Ascending aorta (tissue), 2 donors: ENCODE measurements at regions of chr9 and their contacts with region 1.

Region 1: DNA sequence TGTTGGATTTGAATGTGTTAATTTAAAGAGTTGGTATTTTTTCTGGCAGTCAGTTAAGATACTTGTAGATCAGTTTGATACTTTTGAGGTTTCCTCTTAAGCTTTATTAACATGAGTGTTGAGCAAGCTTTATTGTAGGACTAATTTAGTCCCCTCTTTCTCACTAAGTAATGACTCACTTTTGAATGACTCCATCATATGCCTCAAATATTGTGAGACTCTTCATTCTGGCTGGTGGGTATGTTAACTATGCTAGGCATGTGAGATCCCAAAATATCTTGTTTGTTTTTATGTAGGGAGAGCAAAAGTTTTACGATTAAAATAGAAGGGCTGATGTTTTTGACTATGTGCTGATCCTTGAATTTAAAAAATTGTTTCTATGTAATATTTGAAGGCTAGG is 355.7 kb downstream of the IZUMO3 start:
- DNase-seq: no peak
- H3K4me3 ChIP-seq: no peak overlapping the region
- H3K27ac ChIP-seq: no peak overlapping the region
- H3K4me1 ChIP-seq: no peaks in the 10 kb centered on the region
- H3K27me3 ChIP-seq: no peaks in the 10 kb centered on the region
- CTCF ChIP-seq: no peak

Region 2: DNA sequence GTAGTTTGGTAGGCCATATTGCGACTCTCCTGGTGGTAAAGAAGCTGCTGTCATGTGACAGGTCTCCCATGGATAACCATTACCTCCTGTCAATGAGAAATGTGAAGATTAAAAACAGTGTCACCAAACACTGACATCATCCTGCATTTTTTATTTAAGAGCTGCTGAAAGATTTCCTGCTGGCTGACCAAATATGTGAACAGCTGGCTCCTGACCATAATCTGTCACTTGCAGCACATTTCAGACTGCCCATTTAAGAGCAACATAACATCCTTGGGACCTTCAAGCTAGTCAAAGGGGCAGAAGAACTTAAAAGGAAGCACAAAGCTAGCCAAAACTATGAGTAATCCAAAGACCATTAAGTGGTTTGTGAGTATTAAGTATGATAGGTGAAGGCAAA is 67.7 kb after region 1 on chr9:
- intact Hi-C with region 1: loop called (anchors 10 kb)
- DNase-seq: no peak
- H3K4me3 ChIP-seq: no peak overlapping the region
- H3K27ac ChIP-seq: no peak overlapping the region
- H3K4me1 ChIP-seq: no peaks in the 10 kb centered on the region
- H3K27me3 ChIP-seq: no peaks in the 10 kb centered on the region
- CTCF ChIP-seq: no peak